PC-3 (cell line): ENCODE measurements at regions of chr6 and their contacts with region 1.

Region 1: GRCh38 chr6:119349323-119350042 is at the start of gene MAN1A1:
- DNase-seq: peak; percentile 78
- ATAC-seq: peak; percentile 78
- H3K4me3 ChIP-seq: peak within 1 kb of the TSS; percentile 92
- H3K27ac ChIP-seq: peak within 1 kb of the TSS; percentile 22
- H3K4me1 ChIP-seq: peaks cover 21% of the 10 kb centered on the region; the same call in 1 of the 2 replicates
- H3K27me3 ChIP-seq: no peaks in the 10 kb centered on the region
- CTCF ChIP-seq: no peak
- total RNA-seq, gene MAN1A1: 19.0 and 24.6 TPM in 2 replicates

Region 2: DNA sequence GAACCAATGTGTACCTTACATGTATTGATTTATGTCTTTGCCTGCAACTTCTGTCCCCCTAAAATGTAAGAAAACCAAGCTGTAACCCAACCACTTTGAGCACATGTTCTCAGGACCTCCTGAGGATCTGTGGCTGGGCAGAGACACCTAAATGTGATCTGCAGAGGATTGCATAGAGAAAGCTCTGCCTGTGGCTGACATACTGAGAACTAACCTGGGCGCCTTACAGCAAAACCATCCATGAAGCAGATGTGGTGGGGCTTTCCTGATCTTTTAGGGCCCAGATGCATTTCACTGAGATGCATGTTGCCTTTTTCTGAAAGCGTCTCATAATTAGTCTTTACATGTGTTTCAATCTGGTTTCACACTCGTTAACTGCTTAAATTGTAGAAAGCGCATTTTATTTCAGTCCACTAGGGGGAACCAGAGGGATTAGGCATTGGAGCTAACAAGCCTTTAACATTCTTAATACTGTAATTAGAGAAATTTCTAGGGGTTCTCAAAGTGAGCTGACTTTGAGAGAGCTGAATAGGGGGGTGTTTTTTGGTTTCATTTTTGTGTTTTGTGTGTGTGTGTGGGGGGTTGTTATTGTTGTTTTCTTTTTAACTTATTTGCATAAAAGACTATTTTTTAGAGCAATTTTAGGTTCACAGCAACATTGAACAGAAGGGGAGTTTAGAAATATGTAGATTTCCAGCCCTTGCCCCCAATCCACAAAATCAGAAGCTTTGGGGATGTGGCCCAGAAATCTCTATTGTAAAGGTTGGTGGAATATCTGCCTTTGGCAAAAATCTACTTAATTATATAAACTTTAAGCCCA is 220.1 kb before region 1 on chr6:
- CTCF ChIA-PET with region 1: no interaction called
- POLR2A ChIA-PET with region 1: no interaction called
- intact Hi-C with region 1: loop called (anchors 1 kb)
- DNase-seq: peak; percentile 75
- ATAC-seq: peak; percentile 62
- H3K4me3 ChIP-seq: peak overlapping the region; percentile 13; the same call in 1 of the 2 replicates
- H3K27ac ChIP-seq: peak overlapping the region; percentile 74
- H3K4me1 ChIP-seq: peaks cover 26% of the 10 kb centered on the region
- H3K27me3 ChIP-seq: no peaks in the 10 kb centered on the region
- CTCF ChIP-seq: peak; percentile 81

Region 3: DNA sequence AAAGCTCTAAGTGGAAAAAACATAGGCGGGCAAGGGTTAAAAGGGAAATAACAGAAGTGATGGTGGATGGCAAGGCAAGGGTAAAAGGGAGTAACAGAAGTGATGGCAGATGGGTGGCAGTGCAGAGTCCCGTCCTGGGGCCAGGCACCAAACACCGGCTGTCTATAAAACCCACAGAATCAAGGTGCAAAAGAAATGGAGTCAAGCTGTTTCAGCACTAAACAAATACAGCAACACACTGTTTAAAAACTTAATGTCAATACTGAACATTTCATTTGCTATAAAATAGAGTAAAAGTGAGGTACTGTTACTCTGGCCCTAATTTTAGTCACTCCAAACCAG is 87.6 kb before region 1 on chr6:
- CTCF ChIA-PET with region 1: no interaction called
- POLR2A ChIA-PET with region 1: no interaction called
- intact Hi-C with region 1: loop called (anchors 1 kb)
- DNase-seq: no peak
- ATAC-seq: peak; percentile 6; the same call in 1 of the 2 replicates
- H3K4me3 ChIP-seq: no peak overlapping the region; the same call in 1 of the 2 replicates
- H3K27ac ChIP-seq: peak overlapping the region; percentile 75
- H3K4me1 ChIP-seq: peaks cover 32% of the 10 kb centered on the region
- H3K27me3 ChIP-seq: no peaks in the 10 kb centered on the region
- CTCF ChIP-seq: no peak

Region 4: GRCh38 chr6:119627908-119628669 is 278.6 kb after region 1 on chr6:
- CTCF ChIA-PET with region 1: interaction called, 10 read pairs
- POLR2A ChIA-PET with region 1: no interaction called
- intact Hi-C with region 1: loop called (anchors 1 kb)
- DNase-seq: peak; percentile 71
- ATAC-seq: peak; percentile 78
- H3K4me3 ChIP-seq: peak overlapping the region; percentile 7; the same call in 1 of the 2 replicates
- H3K27ac ChIP-seq: peak overlapping the region; percentile 93
- H3K4me1 ChIP-seq: peaks cover 31% of the 10 kb centered on the region
- H3K27me3 ChIP-seq: no peaks in the 10 kb centered on the region
- CTCF ChIP-seq: peak; percentile 32; the same call in 1 of the 2 replicates

Region 5: GRCh38 chr6:119742188-119742803 is 392.8 kb after region 1 on chr6:
- CTCF ChIA-PET with region 1: no interaction called
- POLR2A ChIA-PET with region 1: no interaction called
- intact Hi-C with region 1: loop called (anchors 2 kb)
- DNase-seq: peak; percentile 72
- ATAC-seq: peak; percentile 73
- H3K4me3 ChIP-seq: no peak overlapping the region
- H3K27ac ChIP-seq: no peak overlapping the region
- H3K4me1 ChIP-seq: no peaks in the 10 kb centered on the region
- H3K27me3 ChIP-seq: no peaks in the 10 kb centered on the region
- CTCF ChIP-seq: peak; percentile 89

Region 6: DNA sequence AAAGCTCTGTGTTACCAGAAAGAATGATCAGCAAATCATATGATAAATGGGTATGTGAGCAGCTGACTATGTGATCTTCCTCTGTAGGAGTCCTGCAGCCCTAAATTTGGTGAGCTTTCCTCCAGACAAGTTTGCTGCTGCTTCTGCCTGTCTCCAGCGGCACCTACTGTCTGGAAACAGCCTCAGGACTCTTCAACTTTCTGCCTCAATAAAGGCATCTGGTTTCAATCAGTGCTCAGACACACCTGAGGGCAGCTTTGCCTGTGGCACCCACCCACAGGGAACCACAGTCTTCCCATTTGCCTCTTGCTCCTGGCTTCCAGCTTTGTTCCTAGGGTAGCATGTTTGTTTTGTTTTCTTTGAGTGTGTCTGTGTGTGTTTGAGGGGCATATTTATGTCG is 728.0 kb after region 1 on chr6:
- CTCF ChIA-PET with region 1: no interaction called
- POLR2A ChIA-PET with region 1: no interaction called
- intact Hi-C with region 1: loop called (anchors 5 kb)
- DNase-seq: peak; percentile 45
- ATAC-seq: peak; percentile 86
- H3K4me3 ChIP-seq: no peak overlapping the region
- H3K27ac ChIP-seq: no peak overlapping the region
- H3K4me1 ChIP-seq: no peaks in the 10 kb centered on the region
- H3K27me3 ChIP-seq: no peaks in the 10 kb centered on the region
- CTCF ChIP-seq: peak; percentile 56